ENCODE measurements at regions of chr11 and their contacts with region 1.

Region 1: GRCh38 chr11:28697920-28698827 is 590.0 kb downstream of the METTL15 start:
- DNase-seq: no peak
- H3K4me3 ChIP-seq: no peak overlapping the region
- CTCF ChIP-seq: peak; percentile 69

Region 2: GRCh38 chr11:28679795-28680468 is 18.2 kb before region 1 on chr11:
- CTCF ChIA-PET with region 1: interaction called, 11 read pairs
- POLR2A ChIA-PET with region 1: no interaction called
- DNase-seq: peak; percentile 77
- H3K4me3 ChIP-seq: no peak overlapping the region
- CTCF ChIP-seq: no peak

Region 3: GRCh38 chr11:28713850-28714249 is 15.7 kb after region 1 on chr11:
- CTCF ChIA-PET with region 1: interaction called, 26 read pairs
- POLR2A ChIA-PET with region 1: no interaction called
- DNase-seq: no peak
- H3K4me3 ChIP-seq: no peak overlapping the region
- CTCF ChIP-seq: no peak

Region 4: DNA sequence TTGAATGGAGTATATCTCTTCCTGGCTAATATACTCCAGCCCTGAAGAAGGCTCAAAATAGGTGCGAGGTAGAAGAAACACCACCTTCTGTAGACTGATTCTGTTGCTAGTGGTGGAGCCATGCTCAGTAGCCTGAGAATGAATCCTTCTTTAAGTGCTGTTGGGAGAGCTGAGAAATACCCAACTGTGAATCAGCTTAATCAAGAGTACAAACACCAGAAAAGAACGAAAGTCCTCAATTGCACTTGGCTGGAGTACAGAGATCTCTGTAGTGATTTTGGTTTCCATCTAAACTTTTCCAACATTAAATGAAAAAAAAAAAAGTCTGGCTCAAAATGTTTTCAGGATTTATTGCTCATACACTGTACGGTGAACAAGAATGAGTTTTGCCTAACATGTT is 29.1 kb after region 1 on chr11:
- CTCF ChIA-PET with region 1: interaction called, 17 read pairs
- POLR2A ChIA-PET with region 1: no interaction called
- DNase-seq: no peak
- H3K4me3 ChIP-seq: no peak overlapping the region
- CTCF ChIP-seq: no peak

Measured in AG04449 (cell line).